WTC11 (cell line): ENCODE measurements at regions of chr10 and their contacts with region 1.

Region 1: DNA sequence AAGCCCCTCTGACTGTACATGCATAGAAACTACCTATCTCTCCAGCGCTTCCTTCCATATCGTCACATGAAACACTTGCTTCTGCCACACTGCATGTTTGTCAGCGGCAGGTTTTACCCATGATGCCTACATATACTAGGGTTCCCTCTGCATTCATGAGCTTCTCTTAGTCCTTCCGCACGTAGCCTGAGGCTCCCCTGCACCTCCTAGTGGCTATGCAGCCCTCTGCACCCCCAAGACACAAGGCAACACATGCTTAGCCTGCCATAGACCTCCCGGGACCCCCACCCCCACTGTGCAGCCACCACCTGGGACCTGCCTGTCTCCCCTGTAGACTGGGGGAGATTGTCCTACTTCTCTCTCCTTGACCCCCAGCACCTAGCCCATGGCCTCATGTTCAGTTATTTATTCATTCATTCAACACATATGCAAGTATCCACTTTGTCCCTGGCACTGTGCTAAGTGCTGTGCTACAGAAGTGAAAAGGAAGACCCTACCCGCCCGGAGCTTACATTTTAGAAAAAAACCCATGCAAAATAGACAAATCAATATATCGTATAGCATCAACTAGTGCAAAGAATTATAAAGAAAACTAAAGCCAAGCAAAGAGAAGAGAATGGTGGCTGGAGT is 23.5 kb downstream of the TMEM273 start:
- DNase-seq: peak; percentile 77
- ATAC-seq: peak; percentile 94
- H3K4me3 Mint-ChIP-seq: no peak overlapping the region
- H3K27ac Mint-ChIP-seq: no peak overlapping the region
- H3K4me1 Mint-ChIP-seq: peaks cover 17% of the 10 kb centered on the region
- H3K27me3 Mint-ChIP-seq: peaks cover 4% of the 10 kb centered on the region; the same call in 1 of the 2 replicates
- CTCF ChIP-seq: peak; percentile 70

Region 2: DNA sequence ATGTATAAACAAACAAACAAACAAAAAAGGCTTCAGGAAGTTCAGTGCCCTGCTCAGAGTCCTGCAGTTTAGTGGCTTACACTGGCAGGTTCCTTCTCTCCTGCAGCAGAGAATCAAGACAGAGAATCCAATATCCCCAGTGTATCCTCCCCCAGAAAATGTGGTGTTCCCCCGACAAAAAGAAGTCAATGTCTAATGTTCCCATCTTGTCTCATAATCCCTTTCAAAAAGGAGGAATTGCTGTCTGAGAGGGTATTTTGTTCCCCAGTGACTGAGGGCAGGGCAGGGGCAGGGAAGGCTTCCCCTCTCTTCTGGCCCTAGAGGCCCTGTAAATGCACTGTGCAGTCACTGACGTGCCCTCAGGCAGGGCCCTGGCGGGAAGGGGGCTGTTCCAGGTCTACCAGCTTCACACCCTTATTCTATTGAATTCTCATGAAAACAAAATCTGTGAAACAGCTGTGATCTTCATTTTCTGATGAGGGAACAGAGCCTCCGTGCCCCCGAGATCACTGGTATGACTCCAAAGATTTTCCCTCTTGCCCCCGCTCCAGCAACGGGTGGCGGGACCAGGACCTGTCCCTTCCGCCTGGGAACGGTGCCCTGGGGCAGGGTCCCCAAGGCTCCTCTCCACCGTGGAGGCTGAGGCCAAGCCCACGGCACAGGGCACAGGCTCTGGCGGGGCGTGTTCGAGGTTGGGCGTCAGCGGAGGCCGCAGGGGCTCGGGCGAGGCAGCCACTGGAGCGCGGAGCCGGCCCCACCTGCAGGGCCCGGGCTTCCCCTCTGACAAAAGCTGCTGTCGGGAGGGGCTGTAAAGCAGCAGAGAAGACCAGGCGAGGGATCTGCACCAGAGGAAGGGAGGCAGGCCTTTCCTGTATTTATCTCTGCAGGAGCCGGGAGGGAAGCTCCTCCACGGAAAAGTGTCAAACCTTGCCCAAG is 493.4 kb before region 1 on chr10:
- CTCF ChIA-PET with region 1: no interaction called
- POLR2A ChIA-PET with region 1: no interaction called
- DNase-seq: peak; percentile 54
- ATAC-seq: peak; percentile 96
- H3K4me3 Mint-ChIP-seq: peak overlapping the region; percentile 18; the same call in 1 of the 2 replicates
- H3K27ac Mint-ChIP-seq: no peak overlapping the region
- H3K4me1 Mint-ChIP-seq: peaks cover 5% of the 10 kb centered on the region
- H3K27me3 Mint-ChIP-seq: peaks cover 5% of the 10 kb centered on the region; the same call in 1 of the 2 replicates
- CTCF ChIP-seq: no peak

Region 3: DNA sequence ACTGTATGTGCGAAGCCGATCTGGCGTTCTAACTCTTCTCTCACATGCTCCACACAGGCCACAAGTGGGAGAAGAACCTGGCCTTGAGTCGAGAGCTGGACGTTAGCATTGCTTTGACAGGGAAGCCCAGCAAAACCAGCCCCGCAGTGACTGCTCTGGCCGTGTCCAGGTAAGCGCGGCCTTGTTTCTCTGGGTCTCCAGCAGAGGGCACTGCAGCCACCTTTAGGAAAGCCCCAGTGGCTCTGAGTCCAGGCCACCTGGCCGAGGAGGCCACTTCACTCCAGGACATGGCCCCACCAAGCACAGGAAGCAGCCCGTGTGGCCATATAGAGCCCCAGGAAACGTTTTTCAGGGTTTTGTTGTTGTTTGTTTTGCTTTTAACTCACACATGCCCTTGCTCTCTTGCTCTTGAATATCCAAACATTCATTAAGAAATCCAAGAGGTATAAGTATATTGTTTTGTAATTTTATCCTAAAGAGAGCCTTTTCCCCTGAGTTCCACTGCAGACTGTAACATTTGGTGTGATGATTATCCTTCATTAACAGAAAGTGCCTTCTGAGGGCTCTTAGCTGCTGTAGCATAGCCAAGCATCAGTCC is 183.3 kb before region 1 on chr10:
- CTCF ChIA-PET with region 1: interaction called, 25 read pairs
- POLR2A ChIA-PET with region 1: interaction called, 3 read pairs
- DNase-seq: peak; percentile 87
- ATAC-seq: peak; percentile 98
- H3K4me3 Mint-ChIP-seq: no peak overlapping the region
- H3K27ac Mint-ChIP-seq: no peak overlapping the region
- H3K4me1 Mint-ChIP-seq: no peaks in the 10 kb centered on the region
- H3K27me3 Mint-ChIP-seq: no peaks in the 10 kb centered on the region
- CTCF ChIP-seq: peak; percentile 80

Region 4: DNA sequence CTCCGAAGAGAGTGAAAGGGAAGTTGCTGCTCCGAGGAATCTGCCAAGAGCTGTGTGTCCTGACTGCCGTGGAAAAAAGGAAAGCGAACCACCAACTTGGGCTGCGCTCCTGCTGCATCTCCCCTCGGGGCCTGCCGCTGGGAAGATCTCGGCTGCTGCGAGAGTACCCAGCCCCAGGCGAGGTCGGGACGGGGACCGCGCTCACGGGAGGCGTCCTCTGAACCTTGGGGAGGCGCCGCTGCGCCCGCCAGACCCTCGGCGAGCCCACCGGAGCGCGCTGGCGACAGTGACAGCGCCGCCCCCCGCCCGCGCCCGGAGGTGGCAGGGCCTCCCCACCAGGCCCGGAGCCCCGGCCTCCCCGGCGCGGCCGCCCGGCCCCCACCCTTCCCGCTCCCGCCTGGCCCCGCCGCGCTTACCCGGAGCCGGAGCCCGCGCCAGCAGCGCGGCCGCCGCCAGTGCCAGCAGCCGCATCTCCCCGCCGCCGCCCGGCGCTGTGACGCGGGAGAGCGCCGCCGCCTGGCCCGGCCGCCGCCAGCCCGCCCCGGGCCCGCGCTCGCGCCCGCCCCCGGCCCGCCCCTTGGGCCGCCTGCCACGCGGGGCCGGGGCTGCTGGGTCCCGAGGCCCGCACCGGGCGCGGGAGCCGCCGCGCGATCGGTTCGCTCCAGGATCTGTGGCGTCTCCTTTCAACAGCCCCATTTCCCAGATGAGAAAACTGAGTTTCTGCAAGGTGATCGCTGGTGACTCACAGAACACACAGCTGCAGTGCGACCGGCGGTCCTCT is 49.5 kb before region 1 on chr10 and contains the start of gene VSTM4:
- CTCF ChIA-PET with region 1: interaction called, 11 read pairs
- POLR2A ChIA-PET with region 1: no interaction called
- DNase-seq: peak; percentile 50
- ATAC-seq: peak; percentile 80
- H3K4me3 Mint-ChIP-seq: peak within 1 kb of the TSS; percentile 79
- H3K27ac Mint-ChIP-seq: no peak within 1 kb of the TSS
- H3K4me1 Mint-ChIP-seq: 0 out of 2 replicates have a peak, but pooled peaks cover 2% of the 10 kb centered on the region
- H3K27me3 Mint-ChIP-seq: peaks cover 21% of the 10 kb centered on the region
- CTCF ChIP-seq: no peak
- total RNA-seq, gene VSTM4: 0.66 to 0.72 TPM (median 0.71 TPM) in 3 replicates

Region 5: DNA sequence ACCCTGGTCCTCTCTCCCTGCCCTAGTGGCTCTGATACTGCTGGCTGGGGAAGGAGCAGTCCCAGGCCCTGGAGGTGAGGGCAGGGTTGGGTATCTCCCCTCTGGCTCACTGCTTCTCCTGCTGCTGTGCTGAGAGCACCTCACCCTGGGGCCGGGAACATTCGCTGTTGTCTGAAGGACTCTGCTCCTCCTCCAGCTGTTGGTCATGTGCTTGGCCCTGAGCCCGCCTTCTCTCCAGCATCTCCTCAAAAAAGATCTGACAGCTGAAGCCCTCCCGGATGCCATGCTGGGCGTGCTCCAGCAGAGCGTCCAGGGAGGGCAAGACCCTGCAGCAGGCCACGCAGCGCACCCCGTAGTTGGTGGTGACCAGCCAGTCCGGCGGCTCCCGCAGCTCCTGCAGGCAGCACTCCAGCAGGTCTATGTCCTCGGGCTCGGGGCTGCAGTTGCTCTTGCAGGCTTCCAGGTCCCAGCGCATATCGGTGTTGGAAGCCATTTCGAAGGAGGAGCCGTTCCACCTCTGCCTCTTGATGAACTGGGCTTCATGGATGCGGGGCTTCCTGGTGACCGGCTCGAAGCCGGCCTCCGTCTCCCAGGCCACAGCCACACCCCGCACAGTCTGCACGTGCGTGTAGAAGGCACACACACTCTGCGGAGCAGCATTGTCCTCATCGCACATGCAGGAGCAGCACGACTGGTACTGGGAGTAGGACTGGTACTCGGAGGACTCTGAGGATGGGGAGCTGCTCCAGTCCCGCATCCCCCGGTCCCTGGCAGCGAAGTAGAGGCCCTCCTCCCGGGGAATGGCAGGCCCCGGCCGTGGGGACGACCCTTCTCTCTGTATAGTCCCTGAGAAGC is 32.9 kb before region 1 on chr10:
- CTCF ChIA-PET with region 1: interaction called, 10 read pairs
- POLR2A ChIA-PET with region 1: no interaction called
- DNase-seq: no peak
- ATAC-seq: 0 out of 2 replicates have a peak, but pooled peaks have one; percentile 20
- H3K4me3 Mint-ChIP-seq: no peak overlapping the region
- H3K27ac Mint-ChIP-seq: no peak overlapping the region; the same call in 1 of the 2 replicates
- H3K4me1 Mint-ChIP-seq: 0 out of 2 replicates have a peak, but pooled peaks cover 4% of the 10 kb centered on the region
- H3K27me3 Mint-ChIP-seq: peaks cover 6% of the 10 kb centered on the region; the same call in 1 of the 2 replicates
- CTCF ChIP-seq: no peak

Region 6: DNA sequence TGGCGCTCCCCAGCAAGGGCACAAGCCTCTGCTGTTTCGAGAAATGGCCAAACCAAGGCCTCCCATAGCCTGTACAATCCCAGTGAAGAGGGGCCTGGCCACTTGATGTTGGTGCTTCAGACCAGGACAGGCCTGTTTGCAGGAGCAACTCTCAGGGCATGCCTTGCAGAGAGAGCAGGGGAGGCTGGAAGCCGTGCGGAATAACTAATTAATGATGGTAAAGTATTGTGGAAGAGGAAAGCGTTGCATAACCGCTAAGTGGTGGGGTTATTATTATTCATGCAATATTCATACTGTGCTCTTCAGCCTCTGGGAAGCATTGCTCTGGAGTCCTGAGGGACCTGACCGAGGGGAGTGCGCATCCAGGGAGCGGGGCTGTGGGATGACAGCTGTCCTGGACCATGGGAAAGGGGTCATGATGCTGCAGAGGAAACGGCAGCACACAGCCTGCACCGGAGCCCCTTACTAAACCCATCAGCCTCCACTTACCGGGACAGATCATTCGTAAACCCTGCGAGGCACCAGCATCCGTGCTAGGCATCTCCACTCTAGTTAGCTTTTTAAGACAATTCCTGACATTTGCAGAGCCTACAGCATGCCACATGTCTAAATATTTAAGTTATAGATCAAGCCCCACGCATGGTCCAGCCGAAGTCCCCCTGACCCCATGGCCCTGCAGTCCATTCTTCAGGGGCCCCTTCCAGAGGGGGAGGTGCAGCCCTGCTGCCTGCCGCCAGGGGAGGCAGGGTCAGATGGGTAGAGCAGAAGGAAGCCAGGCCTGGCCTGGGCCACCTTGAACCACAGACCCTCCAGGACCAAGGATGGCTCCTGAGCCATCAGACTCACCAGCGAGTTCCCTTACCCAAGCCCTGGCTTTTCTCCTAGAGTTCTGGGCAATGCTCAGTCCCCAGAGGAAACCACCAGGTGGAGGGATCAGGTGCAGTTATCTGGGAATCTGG is 11.9 kb after region 1 on chr10:
- CTCF ChIA-PET with region 1: interaction called, 12 read pairs
- POLR2A ChIA-PET with region 1: no interaction called
- DNase-seq: no peak
- ATAC-seq: no peak
- H3K4me3 Mint-ChIP-seq: no peak overlapping the region
- H3K27ac Mint-ChIP-seq: no peak overlapping the region
- H3K4me1 Mint-ChIP-seq: peaks cover 7% of the 10 kb centered on the region; the same call in 1 of the 2 replicates
- H3K27me3 Mint-ChIP-seq: no peaks in the 10 kb centered on the region
- CTCF ChIP-seq: no peak